Activated CD8-positive, alpha-beta T cell treated with anti-CD3 and anti-CD28 coated beads for 36 hours (primary cell): ENCODE measurements at regions of chr1 and their contacts with region 1.

Region 1: GRCh38 chr1:26391450-26391849 is 18.9 kb upstream of the ZNF683 start:
- DNase-seq: peak; percentile 71
- ATAC-seq: peak; percentile 69
- H3K4me3 Mint-ChIP-seq: no peak overlapping the region
- H3K27ac Mint-ChIP-seq: no peak overlapping the region
- H3K4me1 Mint-ChIP-seq: peaks cover 40% of the 10 kb centered on the region
- H3K27me3 Mint-ChIP-seq: no peaks in the 10 kb centered on the region
- CTCF ChIP-seq: peak; percentile 82

Region 2: GRCh38 chr1:26358411-26359384 is 32.8 kb before region 1 on chr1:
- CTCF ChIA-PET with region 1: interaction called, 20 read pairs
- POLR2A ChIA-PET with region 1: interaction called, 3 read pairs
- intact Hi-C with region 1: loop called (anchors 5 kb)
- DNase-seq: peak; percentile 88
- ATAC-seq: peak; percentile 79
- H3K4me3 Mint-ChIP-seq: peak overlapping the region; percentile 60
- H3K27ac Mint-ChIP-seq: peak overlapping the region; percentile 13
- H3K4me1 Mint-ChIP-seq: peaks cover 35% of the 10 kb centered on the region
- H3K27me3 Mint-ChIP-seq: peaks cover 15% of the 10 kb centered on the region
- CTCF ChIP-seq: no peak

Region 3: DNA sequence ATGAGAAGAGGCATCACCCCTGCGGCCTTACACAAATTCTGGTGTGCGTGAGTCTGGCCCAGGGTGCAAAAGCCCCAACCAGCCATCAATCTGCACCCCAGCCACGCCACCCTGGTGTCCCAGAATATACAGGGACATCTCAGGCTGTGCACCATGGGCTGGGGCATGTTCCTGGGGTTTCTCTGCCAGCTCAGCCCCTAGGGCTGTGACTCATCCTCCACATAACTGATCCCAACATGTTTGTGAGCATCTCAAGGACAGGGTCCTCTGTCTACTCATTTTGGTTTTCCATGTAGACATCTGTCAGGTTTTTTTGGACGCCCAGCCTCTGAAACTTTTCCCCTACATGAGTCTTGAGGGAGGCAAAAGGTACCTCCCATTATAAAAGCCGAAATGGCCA is 19.4 kb before region 1 on chr1:
- CTCF ChIA-PET with region 1: interaction called, 17 read pairs
- POLR2A ChIA-PET with region 1: interaction called, 4 read pairs
- intact Hi-C with region 1: no loop called
- DNase-seq: peak; percentile 31
- ATAC-seq: no peak
- H3K4me3 Mint-ChIP-seq: no peak overlapping the region
- H3K27ac Mint-ChIP-seq: peak overlapping the region; percentile 4
- H3K4me1 Mint-ChIP-seq: peaks cover 72% of the 10 kb centered on the region
- H3K27me3 Mint-ChIP-seq: no peaks in the 10 kb centered on the region
- CTCF ChIP-seq: no peak

Region 4: GRCh38 chr1:26378088-26378878 is 13.2 kb before region 1 on chr1:
- CTCF ChIA-PET with region 1: interaction called, 17 read pairs
- POLR2A ChIA-PET with region 1: interaction called, 6 read pairs
- intact Hi-C with region 1: no loop called
- DNase-seq: peak; percentile 91
- ATAC-seq: peak; percentile 96
- H3K4me3 Mint-ChIP-seq: peak overlapping the region; percentile 33
- H3K27ac Mint-ChIP-seq: peak overlapping the region; percentile 82
- H3K4me1 Mint-ChIP-seq: peaks cover 59% of the 10 kb centered on the region
- H3K27me3 Mint-ChIP-seq: no peaks in the 10 kb centered on the region
- CTCF ChIP-seq: no peak

Region 5: DNA sequence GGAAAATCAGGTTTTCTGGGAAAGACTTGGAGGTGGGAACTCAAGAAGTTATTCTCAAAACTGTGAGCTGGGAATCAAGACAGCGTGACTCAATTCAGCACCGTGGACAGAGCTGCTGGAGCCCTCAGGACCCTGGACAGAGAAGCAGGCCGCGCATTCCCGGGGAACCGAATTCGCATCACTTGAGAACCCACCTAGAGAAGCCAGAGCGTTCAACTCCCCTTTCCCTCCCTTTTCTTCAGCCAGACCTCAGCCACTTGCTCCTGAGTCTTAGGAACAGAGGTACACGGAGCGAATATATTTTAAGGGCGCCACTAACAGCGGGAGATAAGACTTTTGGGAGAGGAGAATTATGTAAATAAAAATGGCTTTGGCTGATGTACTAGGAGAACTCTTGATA is 17.2 kb after region 1 on chr1:
- CTCF ChIA-PET with region 1: interaction called, 15 read pairs
- POLR2A ChIA-PET with region 1: interaction called, 3 read pairs
- intact Hi-C with region 1: no loop called
- DNase-seq: peak; percentile 78
- ATAC-seq: peak; percentile 92
- H3K4me3 Mint-ChIP-seq: no peak overlapping the region
- H3K27ac Mint-ChIP-seq: no peak overlapping the region
- H3K4me1 Mint-ChIP-seq: peaks cover 23% of the 10 kb centered on the region
- H3K27me3 Mint-ChIP-seq: peaks cover 54% of the 10 kb centered on the region
- CTCF ChIP-seq: no peak